Activated CD4-positive, alpha-beta T cell treated with anti-CD3 and anti-CD28 coated beads, Interleukin-2, amount 10 ng/mL, durations not matched to agents 24 days and 14 days (primary cell): ENCODE measurements at regions of chr17 and their contacts with region 1.

Region 1: DNA sequence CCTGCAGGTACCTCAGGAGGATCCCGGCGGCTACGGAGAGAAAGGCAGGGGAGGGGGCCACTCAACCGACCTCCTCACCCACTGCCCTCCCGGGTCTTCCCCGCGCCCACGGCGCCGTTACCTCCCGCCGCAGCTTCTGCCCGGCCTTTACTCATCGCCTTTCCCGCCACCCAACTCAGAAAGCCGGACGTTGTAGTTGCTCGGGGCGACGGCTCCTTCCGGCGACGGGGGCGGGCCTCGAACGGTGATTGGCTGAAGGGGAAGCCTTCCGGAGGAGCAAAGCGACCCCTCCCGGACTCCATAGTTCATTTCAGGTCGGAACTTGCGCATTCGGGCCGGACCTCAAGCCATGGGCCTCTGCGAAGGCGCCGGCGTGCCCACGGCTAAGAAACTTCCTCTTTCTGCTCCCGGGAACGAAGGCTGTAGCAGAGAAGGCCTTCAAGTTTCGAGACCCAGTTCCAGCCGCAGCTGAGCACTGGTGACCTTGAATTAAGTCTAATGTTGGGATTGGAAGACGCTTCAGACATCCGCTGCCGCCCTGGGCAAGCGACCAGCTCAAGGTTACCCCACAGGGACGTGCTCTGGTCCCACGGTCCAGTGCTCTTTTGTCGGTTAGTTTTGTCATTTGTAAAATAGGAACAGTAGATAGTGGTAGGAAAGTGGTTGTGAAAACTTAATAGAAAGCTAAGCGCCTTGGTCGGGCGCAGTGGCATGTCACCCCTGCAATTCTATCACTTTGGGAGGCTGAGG is at the start of gene PSMC3IP:
- DNase-seq: peak; percentile 98
- H3K4me3 Mint-ChIP-seq: peak within 1 kb of the TSS; percentile 88
- H3K27ac Mint-ChIP-seq: peak within 1 kb of the TSS; percentile 96
- H3K4me1 Mint-ChIP-seq: peaks cover 30% of the 10 kb centered on the region
- H3K27me3 Mint-ChIP-seq: no peaks in the 10 kb centered on the region
- total RNA-seq, gene PSMC3IP: 29.1 and 31.1 TPM in 2 replicates

Region 2: GRCh38 chr17:42566883-42567573 is 10.7 kb before region 1 on chr17 and contains the start of gene MLX:
- intact Hi-C with region 1: loop called (anchors 1 kb)
- DNase-seq: peak; percentile 98
- H3K4me3 Mint-ChIP-seq: peak within 1 kb of the TSS; percentile 98
- H3K27ac Mint-ChIP-seq: peak within 1 kb of the TSS; percentile 96
- H3K4me1 Mint-ChIP-seq: peaks cover 34% of the 10 kb centered on the region
- H3K27me3 Mint-ChIP-seq: no peaks in the 10 kb centered on the region
- total RNA-seq, gene MLX: 67.8 and 72.6 TPM in 2 replicates

Region 3: GRCh38 chr17:42609182-42609813 is 31.6 kb after region 1 on chr17 and contains the starts of genes RETREG3 and TUBG1:
- intact Hi-C with region 1: loop called (anchors 1 kb)
- DNase-seq: peak; percentile 100
- H3K4me3 Mint-ChIP-seq: peak within 1 kb of the TSS; percentile 99
- H3K27ac Mint-ChIP-seq: peak within 1 kb of the TSS; percentile 94
- H3K4me1 Mint-ChIP-seq: peaks cover 30% of the 10 kb centered on the region
- H3K27me3 Mint-ChIP-seq: no peaks in the 10 kb centered on the region
- total RNA-seq, gene RETREG3: 35.8 and 38.3 TPM in 2 replicates
- total RNA-seq, gene TUBG1: 99.9 and 100 TPM in 2 replicates

Region 4: GRCh38 chr17:42659079-42659931 is 81.6 kb after region 1 on chr17 and contains the start of gene TUBG2:
- intact Hi-C with region 1: loop called (anchors 5 kb)
- DNase-seq: peak; percentile 93
- H3K4me3 Mint-ChIP-seq: peak within 1 kb of the TSS; percentile 94
- H3K27ac Mint-ChIP-seq: peak within 1 kb of the TSS; percentile 85
- H3K4me1 Mint-ChIP-seq: peaks cover 24% of the 10 kb centered on the region
- H3K27me3 Mint-ChIP-seq: peaks cover 9% of the 10 kb centered on the region
- total RNA-seq, gene TUBG2: 11.8 and 12.9 TPM in 2 replicates